ENCODE measurements at regions of chr13 and their contacts with region 1.

Region 1: GRCh38 chr13:36282818-36283445 is 14.7 kb downstream of the CCDC169 start:
- DNase-seq: peak in 1 of 2 donors; percentile 67
- H3K4me3 ChIP-seq: no peak overlapping the region
- H3K27ac ChIP-seq: no peak overlapping the region
- H3K4me1 ChIP-seq: peaks cover 0 to 6% (median 2%) of the 10 kb centered on the region in 4 donors
- H3K27me3 ChIP-seq: no peaks in the 10 kb centered on the region
- CTCF ChIP-seq: peak in 5 of 7 experiments; percentile 22 to 73 (median 54)
- EP300 ChIP-seq: no peak
- POLR2A ChIP-seq: no peak

Region 2: GRCh38 chr13:36057029-36057428 is 225.9 kb before region 1 on chr13:
- intact Hi-C with region 1: no loop called
- DNase-seq: peak in 1 of 2 donors; percentile 35
- H3K4me3 ChIP-seq: no peak overlapping the region
- H3K27ac ChIP-seq: no peak overlapping the region
- H3K4me1 ChIP-seq: peaks cover 0 to 24% (median 9%) of the 10 kb centered on the region in 4 donors
- H3K27me3 ChIP-seq: no peaks in the 10 kb centered on the region
- CTCF ChIP-seq: no peak
- EP300 ChIP-seq: no peak
- POLR2A ChIP-seq: no peak

Region 3: DNA sequence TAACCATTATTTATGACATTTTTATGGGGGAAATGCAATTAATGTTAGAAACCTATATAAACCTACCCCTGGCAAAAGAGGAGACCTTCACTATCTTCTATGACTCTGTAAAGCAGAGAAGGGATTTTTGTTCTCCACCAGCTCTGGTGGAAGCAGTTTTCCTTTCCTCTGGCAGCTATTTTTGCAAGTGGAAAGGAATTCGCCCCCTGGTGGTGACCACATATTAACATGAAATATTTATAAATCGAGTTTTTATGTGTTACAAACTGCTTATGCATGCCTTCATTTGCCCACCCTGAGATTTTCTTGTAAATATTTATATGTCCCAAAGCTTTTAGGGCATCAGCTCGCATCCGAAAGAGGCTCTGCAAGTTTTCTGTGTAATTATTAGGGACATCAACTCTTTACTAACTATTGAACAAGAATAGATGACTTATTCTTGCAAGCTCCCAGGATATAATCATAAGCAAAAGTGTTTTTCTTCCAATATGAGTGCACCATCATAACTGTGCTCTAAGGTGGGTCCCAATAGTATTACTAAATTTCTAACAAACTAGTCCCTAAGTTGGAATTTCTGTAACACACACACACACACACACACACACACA is 453.3 kb after region 1 on chr13:
- intact Hi-C with region 1: loop called (anchors 10 kb)
- DNase-seq: peak; percentile 45 to 82
- H3K4me3 ChIP-seq: no peak overlapping the region
- H3K27ac ChIP-seq: no peak overlapping the region
- H3K4me1 ChIP-seq: no peaks in the 10 kb centered on the region
- H3K27me3 ChIP-seq: no peaks in the 10 kb centered on the region
- CTCF ChIP-seq: peak in 5 of 7 experiments; percentile 19 to 78 (median 49)
- EP300 ChIP-seq: no peak
- POLR2A ChIP-seq: no peak

Measured in stomach (tissue), 19 donors.